B cell (primary cell): ENCODE measurements at regions of chr17 and their contacts with region 1.

Region 1: GRCh38 chr17:81860756-81861518 is 602 bp upstream of the P4HB start:
- DNase-seq: no peak
- ATAC-seq: peak; percentile 89
- H3K4me3 ChIP-seq: peak overlapping the region; percentile 39 to 75 (median 71)
- H3K4me3 Mint-ChIP-seq: peak overlapping the region; percentile 92
- H3K27ac ChIP-seq: peak overlapping the region; percentile 94 to 98
- H3K27ac Mint-ChIP-seq: peak overlapping the region; percentile 96
- H3K4me1 ChIP-seq: peaks cover 17 to 26% of the 10 kb centered on the region in 2 donors
- H3K4me1 Mint-ChIP-seq: peaks cover 32% of the 10 kb centered on the region
- H3K27me3 ChIP-seq: no peaks in the 10 kb centered on the region
- H3K27me3 Mint-ChIP-seq: no peaks in the 10 kb centered on the region
- CTCF ChIP-seq: no peak

Region 2: DNA sequence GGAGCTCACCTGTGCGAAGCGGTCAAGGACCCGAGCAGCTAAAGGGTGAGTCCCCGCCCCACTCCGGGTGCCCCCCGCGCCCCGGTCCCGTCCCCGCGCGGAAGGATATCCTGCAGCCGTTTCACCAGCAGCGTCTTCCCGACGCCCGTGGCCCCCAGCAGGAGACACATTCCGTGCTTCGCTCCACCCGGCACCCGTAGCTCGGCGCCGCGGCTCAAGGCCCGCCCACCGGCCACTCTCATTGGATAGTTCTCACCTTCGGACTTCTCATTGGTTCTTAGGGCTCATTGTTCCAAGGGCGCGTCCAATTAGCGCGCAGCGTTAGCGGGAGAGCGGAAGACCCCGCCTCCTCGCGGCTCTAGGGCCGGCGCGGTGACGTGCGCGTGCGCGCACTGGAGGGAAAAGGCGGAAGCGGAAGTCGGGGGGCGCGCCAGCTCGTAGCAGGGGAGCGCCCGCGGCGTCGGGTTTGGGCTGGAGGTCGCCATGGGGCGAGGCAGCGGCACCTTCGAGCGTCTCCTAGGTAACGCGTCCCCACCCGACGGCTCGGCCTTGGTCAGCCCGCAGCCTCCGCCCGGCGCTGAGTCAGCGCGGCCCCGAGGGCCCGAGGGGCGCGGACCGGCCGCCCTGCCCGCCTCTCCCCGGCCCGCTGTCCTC is 177.2 kb before region 1 on chr17 and contains the starts of genes ARL16 and HGS:
- CTCF ChIA-PET with region 1: no interaction called
- POLR2A ChIA-PET with region 1: no interaction called
- intact Hi-C with region 1: loop called (anchors 1 kb)
- DNase-seq: peak; percentile 100
- ATAC-seq: peak; percentile 98
- H3K4me3 ChIP-seq: peak within 1 kb of the TSS; percentile 58 to 94 (median 93)
- H3K4me3 Mint-ChIP-seq: peak within 1 kb of the TSS; percentile 91
- H3K27ac ChIP-seq: peak within 1 kb of the TSS; percentile 53 to 83
- H3K27ac Mint-ChIP-seq: peak within 1 kb of the TSS; percentile 95
- H3K4me1 ChIP-seq: peaks cover 22 to 25% of the 10 kb centered on the region in 2 donors
- H3K4me1 Mint-ChIP-seq: peaks cover 33% of the 10 kb centered on the region
- H3K27me3 ChIP-seq: no peaks in the 10 kb centered on the region
- H3K27me3 Mint-ChIP-seq: no peaks in the 10 kb centered on the region
- CTCF ChIP-seq: no peak
- total RNA-seq, gene ARL16: 32.5 and 35.3 TPM in 2 replicates
- total RNA-seq, gene HGS: 184 and 190 TPM in 2 replicates

Region 3: DNA sequence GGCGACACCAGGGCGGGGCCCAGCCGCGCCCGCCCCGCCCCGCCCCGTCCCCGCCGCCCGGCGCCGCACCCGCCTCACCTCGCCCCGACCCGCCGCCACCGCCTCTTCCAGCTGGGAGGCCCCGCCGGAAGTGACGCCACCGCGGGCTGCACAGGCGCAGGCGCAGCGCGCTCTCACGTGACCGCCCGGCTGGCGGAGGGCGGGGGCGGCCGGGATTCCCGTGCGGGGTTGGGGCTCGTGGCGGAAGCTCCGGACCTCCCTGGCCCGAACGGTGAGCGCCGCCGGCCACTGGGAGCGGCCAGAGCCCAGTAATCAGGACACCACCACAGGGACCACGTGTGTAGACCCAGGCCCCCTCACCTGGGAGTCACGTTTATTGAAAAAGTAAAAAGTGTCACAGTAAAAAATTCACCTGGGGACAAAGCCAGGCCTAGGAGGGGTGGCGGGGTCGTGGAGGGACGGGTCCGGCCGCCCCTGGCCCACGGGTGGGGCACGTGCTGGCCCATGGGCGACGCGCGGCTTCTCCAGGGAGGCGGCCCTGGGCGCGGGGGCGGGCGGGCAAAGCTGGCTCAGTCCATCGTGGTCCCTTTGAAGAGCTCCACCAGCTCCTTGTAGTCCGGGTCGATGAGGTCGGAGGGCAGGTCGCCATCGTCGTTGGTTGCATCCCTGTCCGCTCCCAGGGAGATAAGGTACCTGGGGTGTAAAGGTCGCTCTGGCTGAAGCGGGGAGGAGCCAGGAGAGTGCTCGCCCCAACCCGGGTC is 27.6 kb before region 1 on chr17 and contains the start of gene MCRIP1:
- CTCF ChIA-PET with region 1: no interaction called
- POLR2A ChIA-PET with region 1: interaction called, 6 read pairs
- intact Hi-C with region 1: loop called (anchors 1 kb)
- DNase-seq: peak; percentile 96
- ATAC-seq: peak; percentile 85
- H3K4me3 ChIP-seq: peak within 1 kb of the TSS; percentile 21 to 80 (median 78)
- H3K4me3 Mint-ChIP-seq: peak within 1 kb of the TSS; percentile 97
- H3K27ac ChIP-seq: peak within 1 kb of the TSS; percentile 85 to 98
- H3K27ac Mint-ChIP-seq: peak within 1 kb of the TSS; percentile 95
- H3K4me1 ChIP-seq: peaks cover 18 to 20% of the 10 kb centered on the region in 2 donors
- H3K4me1 Mint-ChIP-seq: peaks cover 23% of the 10 kb centered on the region
- H3K27me3 ChIP-seq: no peaks in the 10 kb centered on the region
- H3K27me3 Mint-ChIP-seq: no peaks in the 10 kb centered on the region
- CTCF ChIP-seq: no peak
- total RNA-seq, gene MCRIP1: 69.7 and 74.3 TPM in 2 replicates

Region 4: GRCh38 chr17:81846743-81847689 is 13.9 kb before region 1 on chr17:
- CTCF ChIA-PET with region 1: no interaction called
- POLR2A ChIA-PET with region 1: no interaction called
- intact Hi-C with region 1: no loop called
- DNase-seq: no peak
- ATAC-seq: no peak
- H3K4me3 ChIP-seq: no peak overlapping the region
- H3K4me3 Mint-ChIP-seq: no peak overlapping the region
- H3K27ac ChIP-seq: no peak overlapping the region
- H3K27ac Mint-ChIP-seq: no peak overlapping the region
- H3K4me1 ChIP-seq: no peaks in the 10 kb centered on the region
- H3K4me1 Mint-ChIP-seq: no peaks in the 10 kb centered on the region
- H3K27me3 ChIP-seq: no peaks in the 10 kb centered on the region
- H3K27me3 Mint-ChIP-seq: no peaks in the 10 kb centered on the region
- CTCF ChIP-seq: no peak

Region 5: DNA sequence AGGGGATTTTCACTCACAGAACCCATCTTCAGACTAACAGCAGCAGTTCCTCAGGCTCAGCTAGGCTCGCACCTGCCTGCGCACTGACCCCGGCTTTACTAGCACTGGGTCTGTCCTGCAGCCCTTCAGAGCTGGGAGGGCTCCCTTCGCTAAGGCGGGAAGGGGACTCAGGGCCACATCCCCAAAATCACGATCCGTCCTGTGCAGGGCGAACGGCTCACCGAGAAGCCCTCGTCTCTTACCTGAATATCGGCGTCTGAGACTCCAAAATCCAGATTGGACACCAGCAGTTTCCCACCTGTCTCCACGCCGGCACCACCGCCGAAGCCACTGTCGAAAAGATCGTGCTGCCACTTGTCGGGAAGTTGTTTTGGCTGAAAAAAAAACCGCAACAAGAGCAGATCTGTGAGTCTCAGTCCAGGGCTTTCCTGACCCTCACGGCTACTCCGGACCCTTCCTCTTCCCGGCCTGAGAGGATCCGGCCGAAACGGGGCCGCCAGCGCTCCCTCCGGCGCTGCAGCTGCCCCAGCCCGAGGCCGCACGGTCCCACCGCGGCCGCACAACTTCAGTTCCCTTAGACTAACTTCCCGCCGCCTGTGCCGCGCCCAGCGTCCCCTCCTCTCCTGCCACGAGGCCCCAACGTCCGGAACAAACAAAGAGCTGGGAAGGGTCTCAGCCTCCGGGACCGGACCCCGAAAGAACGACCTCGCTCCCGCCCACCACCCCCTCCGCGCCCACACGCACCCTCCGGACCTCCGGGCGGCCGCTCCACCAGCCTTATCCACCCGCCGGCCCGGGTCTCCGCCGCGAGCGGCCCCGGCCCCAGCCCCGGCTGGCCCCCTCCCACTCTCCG is 29.7 kb after region 1 on chr17:
- CTCF ChIA-PET with region 1: no interaction called
- POLR2A ChIA-PET with region 1: interaction called, 3 read pairs
- intact Hi-C with region 1: loop called (anchors 1 kb)
- DNase-seq: peak; percentile 55
- ATAC-seq: no peak
- H3K4me3 ChIP-seq: peak overlapping the region; percentile 4 to 71 (median 62)
- H3K4me3 Mint-ChIP-seq: peak overlapping the region; percentile 83
- H3K27ac ChIP-seq: peak overlapping the region; percentile 34 to 83
- H3K27ac Mint-ChIP-seq: peak overlapping the region; percentile 88
- H3K4me1 ChIP-seq: peaks cover 10 to 25% of the 10 kb centered on the region in 2 donors
- H3K4me1 Mint-ChIP-seq: peaks cover 19% of the 10 kb centered on the region
- H3K27me3 ChIP-seq: no peaks in the 10 kb centered on the region
- H3K27me3 Mint-ChIP-seq: no peaks in the 10 kb centered on the region
- CTCF ChIP-seq: no peak

Region 6: DNA sequence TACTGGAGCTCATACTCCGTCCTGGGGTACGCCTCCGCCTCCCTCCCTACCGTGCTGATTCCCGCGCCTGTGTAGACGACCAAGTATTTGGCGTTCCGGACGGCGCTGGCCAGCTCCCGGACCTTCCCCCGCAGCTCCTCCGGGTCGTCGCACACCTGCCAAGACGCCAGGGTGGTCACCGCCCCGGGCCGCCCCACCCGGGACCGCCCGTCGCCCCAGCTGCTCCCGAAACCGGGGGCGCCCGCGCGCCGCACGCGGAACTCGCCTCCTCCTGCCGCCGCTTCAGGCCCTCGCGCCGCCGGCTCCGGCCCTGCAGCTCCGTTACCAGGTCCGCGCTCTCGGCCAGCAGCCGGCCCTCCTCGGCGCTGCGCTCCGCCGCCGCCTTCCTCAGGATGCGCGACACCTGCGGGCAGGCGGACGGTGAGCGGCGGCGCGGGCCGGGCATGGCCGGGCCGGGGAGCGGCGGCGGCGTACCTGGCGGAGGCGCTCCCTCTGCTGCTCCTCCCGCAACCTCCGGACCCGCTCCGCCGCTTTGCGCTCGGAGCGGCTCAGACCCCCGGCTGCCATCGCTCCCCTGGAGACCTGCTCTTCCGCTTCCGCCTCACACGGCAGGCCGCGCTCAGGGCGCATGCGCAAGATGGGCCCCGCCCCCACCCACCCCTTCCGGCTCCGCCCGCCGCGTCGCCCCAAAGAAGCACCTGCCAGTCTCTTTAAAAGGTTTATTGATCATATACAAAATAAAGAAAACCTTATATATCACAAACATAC is 56.8 kb after region 1 on chr17 and contains the start of gene SIRT7:
- CTCF ChIA-PET with region 1: no interaction called
- POLR2A ChIA-PET with region 1: no interaction called
- intact Hi-C with region 1: loop called (anchors 2 kb)
- DNase-seq: peak; percentile 92
- ATAC-seq: peak; percentile 90
- H3K4me3 ChIP-seq: peak within 1 kb of the TSS; percentile 53 to 75 (median 69)
- H3K4me3 Mint-ChIP-seq: peak within 1 kb of the TSS; percentile 91
- H3K27ac ChIP-seq: peak within 1 kb of the TSS; percentile 44 to 61
- H3K27ac Mint-ChIP-seq: peak within 1 kb of the TSS; percentile 90
- H3K4me1 ChIP-seq: peaks cover 13 to 22% of the 10 kb centered on the region in 2 donors
- H3K4me1 Mint-ChIP-seq: peaks cover 28% of the 10 kb centered on the region
- H3K27me3 ChIP-seq: no peaks in the 10 kb centered on the region
- H3K27me3 Mint-ChIP-seq: no peaks in the 10 kb centered on the region
- CTCF ChIP-seq: no peak
- total RNA-seq, gene SIRT7: 82.7 and 83.2 TPM in 2 replicates

Region 7: GRCh38 chr17:82056729-82057621 is 196.0 kb after region 1 on chr17:
- CTCF ChIA-PET with region 1: no interaction called
- POLR2A ChIA-PET with region 1: no interaction called
- intact Hi-C with region 1: no loop called
- DNase-seq: no peak
- ATAC-seq: no peak
- H3K4me3 ChIP-seq: no peak overlapping the region
- H3K4me3 Mint-ChIP-seq: no peak overlapping the region
- H3K27ac ChIP-seq: no peak overlapping the region
- H3K27ac Mint-ChIP-seq: no peak overlapping the region
- H3K4me1 ChIP-seq: peaks cover 11 to 19% of the 10 kb centered on the region in 2 donors
- H3K4me1 Mint-ChIP-seq: peaks cover 3% of the 10 kb centered on the region
- H3K27me3 ChIP-seq: no peaks in the 10 kb centered on the region
- H3K27me3 Mint-ChIP-seq: no peaks in the 10 kb centered on the region
- CTCF ChIP-seq: no peak

Region 8: GRCh38 chr17:82292251-82293154 is 431.6 kb after region 1 on chr17:
- CTCF ChIA-PET with region 1: no interaction called
- POLR2A ChIA-PET with region 1: no interaction called
- intact Hi-C with region 1: loop called (anchors 10 kb)
- DNase-seq: peak; percentile 96
- ATAC-seq: peak; percentile 93
- H3K4me3 ChIP-seq: peak overlapping the region; percentile 50 to 86 (median 72)
- H3K4me3 Mint-ChIP-seq: peak overlapping the region; percentile 93
- H3K27ac ChIP-seq: peak overlapping the region; percentile 92 to 97
- H3K27ac Mint-ChIP-seq: peak overlapping the region; percentile 93
- H3K4me1 ChIP-seq: peaks cover 20 to 31% of the 10 kb centered on the region in 2 donors
- H3K4me1 Mint-ChIP-seq: peaks cover 42% of the 10 kb centered on the region
- H3K27me3 ChIP-seq: no peaks in the 10 kb centered on the region
- H3K27me3 Mint-ChIP-seq: no peaks in the 10 kb centered on the region
- CTCF ChIP-seq: no peak